ENCODE measurements at regions of chr20 and their contacts with region 1.

Region 1: DNA sequence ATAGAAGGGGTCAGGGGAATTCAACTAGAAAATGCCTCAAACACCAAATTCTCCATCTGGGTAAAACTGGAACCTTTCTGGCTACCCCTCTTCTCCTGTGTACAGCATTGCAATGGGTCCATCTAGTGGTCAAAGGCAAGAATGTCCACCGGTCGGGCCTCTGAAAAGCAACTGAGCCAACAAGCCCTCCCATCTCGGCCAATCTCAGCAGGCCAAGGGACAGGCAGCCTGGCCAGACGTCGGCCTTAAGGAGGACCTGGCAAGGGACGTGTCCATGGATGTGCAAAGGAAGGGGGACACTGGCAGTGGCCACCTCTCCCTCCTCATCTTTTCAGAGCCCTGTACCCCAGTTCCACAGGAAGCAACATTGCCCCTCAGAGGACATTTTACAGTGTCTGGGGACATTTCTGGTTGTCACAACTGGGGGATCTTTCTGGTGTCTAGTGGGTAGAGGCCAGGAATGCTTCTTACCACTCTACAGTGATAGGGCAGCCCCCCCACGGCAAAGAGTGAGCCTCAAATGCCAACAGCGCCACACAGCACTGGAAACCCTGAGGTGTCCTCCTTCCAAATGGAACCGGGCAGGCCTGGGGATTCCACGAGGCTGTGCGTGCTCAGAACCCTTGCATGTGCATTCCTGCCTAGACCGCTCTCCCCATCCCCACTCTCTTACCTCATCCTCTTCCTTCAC is 99.8 kb upstream of the FOXA2 start:
- DNase-seq: no peak
- H3K4me3 ChIP-seq: no peak overlapping the region
- H3K27ac ChIP-seq: no peak overlapping the region
- H3K4me1 ChIP-seq: peaks cover 0 to 22% (median 12%) of the 10 kb centered on the region in 6 donors
- H3K27me3 ChIP-seq: no peaks in the 10 kb centered on the region
- CTCF ChIP-seq: peak; percentile 51 to 86 (median 81)
- POLR2A ChIP-seq: no peak

Region 2: GRCh38 chr20:22333885-22334545 is 350.2 kb before region 1 on chr20:
- intact Hi-C with region 1: loop called (anchors 2 kb)
- DNase-seq: no peak
- H3K4me3 ChIP-seq: no peak overlapping the region
- H3K27ac ChIP-seq: no peak overlapping the region
- H3K4me1 ChIP-seq: peaks cover 0 to under 1% (median 0%) of the 10 kb centered on the region in 6 donors
- H3K27me3 ChIP-seq: peaks cover 0 to 44% (median 0%) of the 10 kb centered on the region in 7 donors
- CTCF ChIP-seq: peak in 9 of 11 experiments; percentile 33 to 78 (median 65)
- POLR2A ChIP-seq: no peak

Region 3: DNA sequence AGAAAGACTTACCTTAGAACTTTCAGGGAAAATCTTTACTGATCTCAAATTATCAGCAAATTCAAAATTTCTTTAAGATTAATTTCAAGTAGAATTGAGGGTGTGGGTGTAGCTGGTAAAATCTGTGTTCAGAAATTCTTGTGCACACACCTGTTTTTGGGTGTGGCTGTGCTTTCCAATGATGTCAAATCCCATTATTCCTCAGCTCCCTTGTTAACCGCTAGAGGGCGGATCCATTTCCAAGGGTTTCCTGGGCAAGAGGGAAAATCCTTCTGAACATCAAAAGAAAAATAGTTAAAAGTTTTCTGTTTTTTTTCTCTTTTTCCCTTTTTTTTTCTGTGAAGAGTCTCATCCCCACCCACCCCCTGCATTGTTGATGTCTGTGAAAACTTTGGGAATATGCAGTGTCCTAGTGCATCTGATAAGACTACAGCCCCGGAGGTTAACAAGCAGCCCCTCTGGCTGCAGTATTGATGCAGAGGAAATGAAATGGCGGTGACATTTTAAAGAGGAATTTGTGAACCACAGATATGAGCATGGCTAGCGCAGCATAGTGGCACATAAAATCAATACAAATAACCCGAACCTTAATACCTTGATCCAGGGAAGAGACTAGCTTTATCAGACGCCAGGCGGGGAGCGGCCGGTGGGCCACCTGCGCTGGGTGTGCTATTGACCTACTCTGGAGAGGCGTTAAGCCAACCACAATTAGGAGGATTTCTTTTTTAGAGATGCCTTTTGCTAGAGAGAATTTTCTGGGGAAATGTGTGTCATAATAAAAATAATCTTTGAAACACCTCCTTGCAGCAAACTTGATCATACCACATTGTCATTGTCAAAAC is 230.8 kb before region 1 on chr20:
- intact Hi-C with region 1: loop called (anchors 10 kb)
- DNase-seq: no peak
- H3K4me3 ChIP-seq: no peak overlapping the region
- H3K27ac ChIP-seq: no peak overlapping the region
- H3K4me1 ChIP-seq: no peaks in the 10 kb centered on the region
- H3K27me3 ChIP-seq: peaks cover 0 to 5% (median 0%) of the 10 kb centered on the region in 7 donors
- CTCF ChIP-seq: peak in 6 of 11 experiments; percentile 20 to 56 (median 44)
- POLR2A ChIP-seq: no peak